Activated naive CD8-positive, alpha-beta T cell treated with anti-CD3 and anti-CD28 coated beads, Interleukin-2, amount 10 ng/mL, durations not matched to agents 7 days and 5 days (primary cell): ENCODE measurements at regions of chr14 and their contacts with region 1.

Region 1: GRCh38 chr14:49892636-49893308 is at the start of gene ARF6:
- DNase-seq: peak; percentile 98
- ATAC-seq: peak; percentile 89
- H3K4me3 Mint-ChIP-seq: peak within 1 kb of the TSS; percentile 99
- H3K27ac Mint-ChIP-seq: peak within 1 kb of the TSS; percentile 99
- H3K4me1 Mint-ChIP-seq: peaks cover 16% of the 10 kb centered on the region
- H3K27me3 Mint-ChIP-seq: no peaks in the 10 kb centered on the region
- total RNA-seq, gene ARF6: 162 to 169 TPM

Region 2: GRCh38 chr14:49879683-49880204 is 13.0 kb before region 1 on chr14:
- POLR2A ChIA-PET with region 1: interaction called, 15 read pairs
- DNase-seq: peak; percentile 44
- ATAC-seq: peak; percentile 96
- H3K4me3 Mint-ChIP-seq: no peak overlapping the region
- H3K27ac Mint-ChIP-seq: peak overlapping the region; percentile 46
- H3K4me1 Mint-ChIP-seq: peaks cover 15% of the 10 kb centered on the region
- H3K27me3 Mint-ChIP-seq: no peaks in the 10 kb centered on the region

Region 3: DNA sequence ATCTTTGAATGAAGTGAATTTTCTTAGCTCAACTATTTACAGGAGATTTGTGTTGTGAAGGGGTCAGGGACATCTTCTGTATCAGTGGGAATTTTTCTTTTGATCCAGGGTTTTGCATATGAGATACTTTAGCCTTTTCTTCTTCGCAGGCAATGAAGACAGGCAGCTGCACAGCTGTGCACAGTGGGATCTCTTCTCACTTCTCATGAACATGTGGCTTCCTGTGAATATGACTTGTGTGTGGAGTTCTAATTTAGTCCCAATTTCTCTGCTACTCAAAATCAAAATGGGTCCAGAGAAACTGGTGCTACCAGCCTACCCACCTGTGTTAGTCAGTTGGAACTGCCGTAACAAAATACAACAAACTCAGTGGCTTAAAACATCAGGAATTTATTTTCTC is 37.9 kb after region 1 on chr14:
- POLR2A ChIA-PET with region 1: no interaction called
- DNase-seq: no peak
- ATAC-seq: no peak
- H3K4me3 Mint-ChIP-seq: no peak overlapping the region
- H3K27ac Mint-ChIP-seq: no peak overlapping the region
- H3K4me1 Mint-ChIP-seq: peaks cover 6% of the 10 kb centered on the region
- H3K27me3 Mint-ChIP-seq: no peaks in the 10 kb centered on the region

Region 4: GRCh38 chr14:49946320-49947141 is 53.8 kb after region 1 on chr14:
- POLR2A ChIA-PET with region 1: interaction called, 19 read pairs
- DNase-seq: no peak
- ATAC-seq: peak; percentile 66
- H3K4me3 Mint-ChIP-seq: peak overlapping the region; percentile 58
- H3K27ac Mint-ChIP-seq: peak overlapping the region; percentile 89
- H3K4me1 Mint-ChIP-seq: peaks cover 64% of the 10 kb centered on the region
- H3K27me3 Mint-ChIP-seq: no peaks in the 10 kb centered on the region

Region 5: DNA sequence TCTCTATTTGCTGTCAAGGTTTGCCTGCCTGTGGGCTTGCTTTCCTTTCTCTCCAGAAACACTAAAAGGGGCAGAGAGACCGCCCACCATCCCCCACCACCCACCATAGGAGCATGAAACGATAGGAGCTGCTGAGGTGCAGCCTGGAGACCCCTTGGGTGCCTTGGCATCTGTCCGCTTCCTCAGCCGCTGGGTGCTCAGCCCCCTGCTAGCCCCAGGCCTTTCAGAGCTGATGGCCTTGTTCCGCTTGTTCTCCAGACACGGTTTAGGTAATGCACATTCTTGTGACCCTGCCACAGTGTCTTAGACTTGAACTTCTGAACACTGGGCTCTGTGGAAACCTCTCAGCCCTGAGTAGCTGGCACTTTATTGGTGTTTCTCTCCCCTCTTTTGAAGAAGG is 86.4 kb after region 1 on chr14:
- POLR2A ChIA-PET with region 1: interaction called, 62 read pairs
- DNase-seq: no peak
- ATAC-seq: no peak
- H3K4me3 Mint-ChIP-seq: peak overlapping the region; percentile 87
- H3K27ac Mint-ChIP-seq: peak overlapping the region; percentile 98
- H3K4me1 Mint-ChIP-seq: peaks cover 61% of the 10 kb centered on the region
- H3K27me3 Mint-ChIP-seq: no peaks in the 10 kb centered on the region

Region 6: GRCh38 chr14:50012599-50013558 is 120.1 kb after region 1 on chr14:
- POLR2A ChIA-PET with region 1: no interaction called
- DNase-seq: no peak
- ATAC-seq: no peak
- H3K4me3 Mint-ChIP-seq: no peak overlapping the region
- H3K27ac Mint-ChIP-seq: no peak overlapping the region
- H3K4me1 Mint-ChIP-seq: peaks cover 24% of the 10 kb centered on the region
- H3K27me3 Mint-ChIP-seq: no peaks in the 10 kb centered on the region

Region 7: DNA sequence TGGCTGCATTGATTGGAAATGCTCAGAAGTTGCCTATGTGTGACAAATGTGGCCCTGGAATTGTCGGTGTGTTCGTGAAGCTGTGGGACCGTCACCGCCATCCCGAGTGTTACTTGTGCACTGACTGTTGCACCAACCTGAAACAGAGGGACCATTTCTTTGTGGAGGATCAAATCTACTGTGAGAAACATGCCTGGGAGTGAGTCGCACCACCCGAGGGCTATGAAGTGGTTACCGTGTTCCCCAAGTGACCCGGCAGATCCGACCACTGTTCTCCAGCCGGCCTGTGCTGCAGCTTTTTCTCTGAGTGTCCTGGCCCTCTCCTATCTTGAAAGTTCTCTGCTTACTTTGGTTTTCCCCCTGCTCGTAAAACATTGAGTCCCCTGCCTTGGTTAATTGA is 158.3 kb after region 1 on chr14:
- POLR2A ChIA-PET with region 1: no interaction called
- DNase-seq: no peak
- ATAC-seq: no peak
- H3K4me3 Mint-ChIP-seq: no peak overlapping the region
- H3K27ac Mint-ChIP-seq: no peak overlapping the region
- H3K4me1 Mint-ChIP-seq: peaks cover 17% of the 10 kb centered on the region
- H3K27me3 Mint-ChIP-seq: no peaks in the 10 kb centered on the region